ENCODE measurements at regions of chr3 and their contacts with region 1.

Region 1: DNA sequence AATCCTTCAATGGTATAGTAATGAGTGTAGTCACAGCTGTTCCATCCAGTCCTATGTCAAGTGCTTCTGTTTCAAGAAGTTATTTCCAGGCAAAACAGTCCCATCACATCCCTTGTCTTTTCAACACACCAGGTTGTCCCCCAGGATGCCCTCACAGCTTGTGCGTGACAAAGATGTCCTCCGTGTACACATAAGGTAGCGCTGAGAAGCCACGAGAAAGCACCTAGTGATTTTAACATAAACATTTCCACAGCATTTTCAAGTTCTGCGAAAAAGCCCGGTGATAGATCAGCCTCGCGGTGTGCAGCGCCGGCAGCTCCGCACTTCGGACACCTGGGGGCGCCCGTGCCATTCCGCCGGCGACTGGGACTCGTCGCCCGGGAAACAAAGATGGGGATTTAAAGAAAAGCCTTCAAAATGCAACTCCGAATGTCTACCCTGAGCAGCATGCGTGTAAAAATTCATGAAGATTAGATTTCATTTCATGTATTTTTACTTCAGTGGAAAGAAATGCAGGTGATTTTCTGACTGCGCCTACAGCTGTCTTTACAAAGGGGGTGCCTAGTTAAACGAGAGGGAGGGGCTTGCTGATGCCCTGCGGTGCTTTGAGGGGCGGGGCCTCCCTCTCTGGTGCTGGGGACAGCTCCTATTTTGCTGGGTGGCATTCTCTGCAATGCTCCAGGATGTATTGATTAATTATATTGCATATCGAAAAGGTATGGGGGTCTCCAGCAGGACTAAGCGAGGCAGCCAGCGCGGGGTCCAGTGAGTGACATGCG is 49.9 kb downstream of the KY start:
- DNase-seq: peak; percentile 83
- CTCF ChIP-seq: peak; percentile 97

Region 2: DNA sequence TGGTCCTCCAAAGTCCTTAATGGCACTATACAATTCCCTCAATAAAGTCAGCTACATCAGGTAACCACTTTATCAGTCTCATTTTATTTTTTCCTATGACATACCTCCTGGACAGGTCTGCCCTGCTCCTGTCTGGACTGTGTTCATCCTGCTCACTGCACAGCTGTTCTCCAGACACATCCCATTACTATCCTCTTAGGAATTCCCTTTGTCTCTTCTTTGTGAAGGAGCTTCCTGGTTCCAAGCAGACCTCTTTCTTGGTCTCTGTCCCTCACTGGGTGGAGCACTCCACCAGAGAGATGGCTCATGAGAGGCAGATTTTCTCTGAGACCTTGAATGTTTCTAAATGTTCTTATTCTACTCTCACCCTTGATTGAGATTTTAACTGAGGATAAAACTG is 10.1 kb before region 1 on chr3:
- CTCF ChIA-PET with region 1: interaction called, 11 read pairs
- POLR2A ChIA-PET with region 1: no interaction called
- DNase-seq: no peak
- CTCF ChIP-seq: no peak

Region 3: GRCh38 chr3:134618478-134619300 is 17.8 kb after region 1 on chr3:
- CTCF ChIA-PET with region 1: interaction called, 63 read pairs
- POLR2A ChIA-PET with region 1: no interaction called
- DNase-seq: no peak
- CTCF ChIP-seq: no peak

Region 4: GRCh38 chr3:134640872-134641470 is 40.1 kb after region 1 on chr3:
- CTCF ChIA-PET with region 1: interaction called, 14 read pairs
- POLR2A ChIA-PET with region 1: no interaction called
- DNase-seq: no peak
- CTCF ChIP-seq: peak; percentile 34

Region 5: GRCh38 chr3:134754768-134755559 is 154.1 kb after region 1 on chr3:
- CTCF ChIA-PET with region 1: interaction called, 30 read pairs
- POLR2A ChIA-PET with region 1: no interaction called
- DNase-seq: peak; percentile 67
- CTCF ChIP-seq: peak; percentile 69

Region 6: DNA sequence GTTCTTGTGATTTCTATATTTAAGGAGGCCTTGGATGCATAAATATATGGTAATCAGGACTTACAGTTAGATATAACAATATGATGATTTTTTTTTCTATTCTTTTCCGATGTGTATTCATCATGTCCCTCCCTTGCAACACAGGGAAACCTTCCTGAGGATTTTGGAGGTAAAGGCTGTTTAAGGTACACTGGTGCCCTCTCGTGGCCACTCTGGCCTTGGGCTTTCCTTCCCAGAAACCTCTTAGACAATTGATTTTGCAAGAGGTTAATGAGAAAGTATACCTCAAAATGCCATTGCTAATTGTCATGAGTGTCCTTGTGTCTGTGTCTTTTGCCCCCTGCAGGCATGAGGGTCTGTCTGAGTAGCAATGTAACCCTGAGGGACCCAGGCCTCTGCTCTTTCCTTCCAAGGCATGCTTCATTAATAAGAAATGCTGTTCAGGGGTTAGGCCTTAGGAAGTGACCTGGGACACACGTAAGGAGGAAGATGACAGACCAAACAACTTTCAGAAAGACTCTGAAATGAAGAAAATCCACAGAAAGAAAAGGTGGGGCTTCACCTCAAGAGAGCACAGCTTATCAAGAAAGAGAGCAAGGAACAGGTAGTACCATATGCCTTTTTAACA is 1294.3 kb after region 1 on chr3:
- CTCF ChIA-PET with region 1: interaction called, 11 read pairs
- POLR2A ChIA-PET with region 1: no interaction called
- DNase-seq: peak; percentile 44
- CTCF ChIP-seq: peak; percentile 86

Region 7: GRCh38 chr3:136042608-136043221 is 1441.8 kb after region 1 on chr3:
- CTCF ChIA-PET with region 1: interaction called, 25 read pairs
- POLR2A ChIA-PET with region 1: no interaction called
- DNase-seq: peak; percentile 38
- CTCF ChIP-seq: peak; percentile 38